ENCODE measurements at regions of chr11 and their contacts with region 1.

Region 1: DNA sequence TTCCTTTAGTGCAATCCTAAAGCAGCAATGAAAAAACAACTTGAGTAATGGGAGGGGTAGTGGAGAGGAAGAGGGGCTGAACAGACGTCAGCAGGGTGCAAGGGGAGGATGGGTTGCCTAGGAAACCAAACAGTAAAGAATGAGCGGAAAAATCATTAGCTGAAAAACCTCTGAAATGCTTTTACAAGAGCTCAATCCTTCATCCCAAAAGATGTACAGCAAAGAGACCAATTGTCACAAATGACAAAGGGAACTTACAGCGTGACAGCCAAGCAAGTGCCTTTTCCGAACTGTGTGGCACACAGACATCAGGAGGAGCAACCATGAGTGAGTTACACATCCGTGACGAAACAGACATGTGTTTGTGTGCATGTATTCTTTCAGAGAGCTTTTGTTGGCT is 104.6 kb downstream of the SIK3 start:
- DNase-seq: peak in 1 of 5 donors; percentile 16
- ATAC-seq: peak in 2 of 4 donors; percentile 25 to 78
- H3K4me3 ChIP-seq: no peak overlapping the region
- H3K27ac ChIP-seq: peak overlapping the region in 5 of 12 donors; percentile 5 to 21 (median 18)
- H3K4me1 ChIP-seq: peaks cover 0 to 44% (median 34%) of the 10 kb centered on the region in 12 donors
- H3K27me3 ChIP-seq: no peaks in the 10 kb centered on the region
- CTCF ChIP-seq: no peak
- POLR2A ChIP-seq: no peak

Region 2: GRCh38 chr11:116927163-116927974 is 66.2 kb before region 1 on chr11:
- intact Hi-C with region 1: loop called in 1 of 10 experiments (anchors 5 kb)
- DNase-seq: no peak
- ATAC-seq: no peak
- H3K4me3 ChIP-seq: no peak overlapping the region
- H3K27ac ChIP-seq: peak overlapping the region in 1 of 12 donors; percentile 82
- H3K4me1 ChIP-seq: peaks cover 12 to 82% (median 48%) of the 10 kb centered on the region in 12 donors
- H3K27me3 ChIP-seq: no peaks in the 10 kb centered on the region
- CTCF ChIP-seq: peak in 11 of 12 donors; percentile 11 to 43 (median 27)
- POLR2A ChIP-seq: no peak

Region 3: DNA sequence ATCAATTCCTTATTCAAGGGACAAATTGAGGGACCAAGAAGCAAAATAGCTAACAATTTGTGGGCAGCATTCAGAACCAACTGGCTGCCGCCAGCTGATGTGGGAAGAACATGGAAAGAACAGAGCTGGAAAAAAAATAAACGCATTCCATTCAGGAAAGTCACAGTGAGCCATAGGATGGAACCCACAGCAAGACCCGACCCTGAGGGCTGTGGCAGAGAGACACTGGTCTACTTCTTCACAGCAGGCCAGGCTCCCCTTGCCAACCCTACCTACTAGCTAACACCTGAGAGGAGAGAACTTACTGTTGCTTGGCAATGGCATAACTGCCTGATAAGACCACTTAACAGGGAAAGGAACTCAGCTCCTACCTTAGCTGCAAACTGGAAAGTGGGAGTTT is 32.7 kb before region 1 on chr11:
- intact Hi-C with region 1: no loop called
- DNase-seq: no peak
- ATAC-seq: peak in 3 of 4 donors; percentile 11 to 45 (median 45)
- H3K4me3 ChIP-seq: no peak overlapping the region
- H3K27ac ChIP-seq: no peak overlapping the region
- H3K4me1 ChIP-seq: peaks cover 0 to 61% (median 23%) of the 10 kb centered on the region in 12 donors
- H3K27me3 ChIP-seq: no peaks in the 10 kb centered on the region
- CTCF ChIP-seq: no peak
- POLR2A ChIP-seq: no peak

Region 4: DNA sequence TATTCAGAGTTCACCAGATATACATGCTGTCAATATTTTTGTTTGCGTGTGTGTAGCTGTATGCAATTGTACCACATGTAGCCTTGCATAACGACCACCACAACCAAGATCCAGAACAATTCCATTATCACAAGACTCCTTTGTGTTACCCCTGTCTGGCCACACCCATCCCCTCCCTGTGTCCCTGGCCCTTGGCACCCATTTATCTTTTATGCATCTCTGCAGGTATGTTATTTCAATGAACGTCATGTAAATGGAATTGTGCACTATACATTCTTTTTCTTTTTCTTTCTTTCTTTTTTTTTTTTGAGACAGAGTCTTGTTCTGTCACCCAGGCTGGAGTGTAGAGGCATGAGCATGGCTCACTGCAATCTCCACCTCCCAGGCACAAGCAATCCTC is 140.8 kb after region 1 on chr11:
- intact Hi-C with region 1: no loop called
- DNase-seq: no peak
- ATAC-seq: no peak
- H3K4me3 ChIP-seq: no peak overlapping the region
- H3K27ac ChIP-seq: no peak overlapping the region
- H3K4me1 ChIP-seq: no peaks in the 10 kb centered on the region
- H3K27me3 ChIP-seq: no peaks in the 10 kb centered on the region
- CTCF ChIP-seq: no peak
- POLR2A ChIP-seq: no peak

Region 5: GRCh38 chr11:117579161-117579560 is 585.6 kb after region 1 on chr11:
- intact Hi-C with region 1: no loop called
- DNase-seq: no peak
- ATAC-seq: no peak
- H3K4me3 ChIP-seq: no peak overlapping the region
- H3K27ac ChIP-seq: no peak overlapping the region
- H3K4me1 ChIP-seq: no peaks in the 10 kb centered on the region
- H3K27me3 ChIP-seq: no peaks in the 10 kb centered on the region
- CTCF ChIP-seq: no peak
- POLR2A ChIP-seq: no peak